Panc1 (cell line): ENCODE measurements at regions of chr13 and their contacts with region 1.

Region 1: DNA sequence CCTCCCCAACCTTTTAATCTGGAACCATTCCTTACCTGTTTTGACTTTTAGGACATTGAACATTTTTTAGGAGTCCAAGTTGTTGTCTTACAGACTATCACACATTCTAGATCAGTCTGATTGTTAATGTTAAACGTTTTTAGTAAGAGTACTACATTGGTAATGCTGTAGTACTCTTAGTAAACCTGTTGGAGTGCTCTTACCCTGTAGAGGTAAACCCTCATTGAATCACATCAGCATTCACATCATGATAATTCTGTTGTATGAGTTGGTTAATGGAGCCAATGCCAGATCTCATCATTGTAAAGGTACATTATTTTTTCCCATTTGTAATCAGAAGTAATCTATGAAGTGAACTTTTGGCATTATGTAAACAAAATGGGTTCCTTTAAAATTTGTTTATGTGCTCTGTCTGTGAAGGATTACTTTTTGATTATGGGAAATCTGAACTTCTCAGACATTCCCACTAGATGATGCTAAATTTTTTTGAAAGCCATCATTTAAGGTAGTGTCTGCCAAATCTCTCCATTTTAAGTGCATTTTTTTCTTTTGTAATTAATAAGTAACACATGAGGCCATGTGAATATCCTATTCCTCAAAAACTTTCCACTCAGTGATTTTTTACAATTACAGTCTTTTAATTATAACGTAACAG is 55.2 kb downstream of the VWA8 start:
- DNase-seq: peak; percentile 30
- ATAC-seq: peak; percentile 94
- H3K4me3 ChIP-seq: no peak overlapping the region
- H3K27ac ChIP-seq: no peak overlapping the region
- H3K4me1 ChIP-seq: no peaks in the 10 kb centered on the region
- H3K27me3 ChIP-seq: no peaks in the 10 kb centered on the region
- CTCF ChIP-seq: peak; percentile 61; the same call in 1 of the 2 replicates

Region 2: GRCh38 chr13:42047561-42048341 is 142.0 kb after region 1 on chr13:
- CTCF ChIA-PET with region 1: no interaction called
- POLR2A ChIA-PET with region 1: no interaction called
- in situ Hi-C with region 1: no loop called
- intact Hi-C with region 1: loop called (anchors 2 kb)
- DNase-seq: no peak
- ATAC-seq: peak; percentile 65
- H3K4me3 ChIP-seq: peak overlapping the region; percentile 79 to 85
- H3K27ac ChIP-seq: peak overlapping the region; percentile 91
- H3K4me1 ChIP-seq: peaks cover 22% of the 10 kb centered on the region
- H3K27me3 ChIP-seq: no peaks in the 10 kb centered on the region
- CTCF ChIP-seq: no peak

Region 3: GRCh38 chr13:42181381-42181953 is 275.7 kb after region 1 on chr13:
- CTCF ChIA-PET with region 1: no interaction called
- POLR2A ChIA-PET with region 1: no interaction called
- in situ Hi-C with region 1: no loop called
- intact Hi-C with region 1: no loop called
- DNase-seq: no peak
- ATAC-seq: no peak
- H3K4me3 ChIP-seq: no peak overlapping the region
- H3K27ac ChIP-seq: no peak overlapping the region
- H3K4me1 ChIP-seq: no peaks in the 10 kb centered on the region
- H3K27me3 ChIP-seq: no peaks in the 10 kb centered on the region
- CTCF ChIP-seq: no peak